A673 (cell line): ENCODE measurements at regions of chr12 and their contacts with region 1.

Region 1: GRCh38 chr12:94101738-94102660 is 46.4 kb upstream of the PLXNC1 start:
- DNase-seq: peak; percentile 93
- H3K4me3 ChIP-seq: peak overlapping the region; percentile 53
- H3K27ac ChIP-seq: no peak overlapping the region
- H3K4me1 ChIP-seq: no peaks in the 10 kb centered on the region
- H3K27me3 ChIP-seq: no peaks in the 10 kb centered on the region
- CTCF ChIP-seq: peak; percentile 91

Region 2: GRCh38 chr12:92784795-92785562 is 1317.0 kb before region 1 on chr12:
- CTCF ChIA-PET with region 1: interaction called, 3 read pairs
- POLR2A ChIA-PET with region 1: no interaction called
- intact Hi-C with region 1: loop called (anchors 5 kb)
- DNase-seq: peak; percentile 88
- H3K4me3 ChIP-seq: no peak overlapping the region
- H3K27ac ChIP-seq: no peak overlapping the region
- H3K4me1 ChIP-seq: no peaks in the 10 kb centered on the region
- H3K27me3 ChIP-seq: no peaks in the 10 kb centered on the region
- CTCF ChIP-seq: peak; percentile 67

Region 3: DNA sequence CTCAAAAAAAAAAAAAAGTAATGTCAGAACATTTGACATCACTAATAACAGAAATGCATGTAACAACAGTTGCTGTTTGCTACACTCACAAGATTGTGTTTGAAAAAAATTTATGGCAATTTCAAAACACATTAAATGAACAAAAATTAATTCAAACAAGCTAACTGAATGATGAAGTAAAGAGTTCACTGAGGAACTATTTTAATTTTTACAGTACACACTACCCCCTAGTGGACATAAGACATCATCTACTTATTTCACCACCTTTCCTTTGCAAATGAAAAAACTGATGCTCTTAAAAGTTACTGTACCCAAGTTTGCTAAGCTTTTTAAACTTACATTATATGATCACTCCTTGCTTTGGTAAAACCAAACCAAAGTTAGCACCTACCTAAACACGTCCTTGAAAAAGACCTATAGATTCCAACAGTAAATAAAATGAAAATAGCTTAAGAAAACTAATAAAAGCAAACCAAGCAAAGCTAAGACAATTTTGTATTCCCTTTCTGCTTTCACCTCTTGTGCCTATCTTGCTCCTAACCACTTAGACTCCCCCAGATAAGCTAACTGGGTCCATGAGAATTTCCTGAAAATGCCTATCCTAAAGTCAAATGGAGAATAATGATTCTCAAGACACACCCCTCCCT is 682.5 kb before region 1 on chr12:
- CTCF ChIA-PET with region 1: interaction called, 4 read pairs
- POLR2A ChIA-PET with region 1: no interaction called
- intact Hi-C with region 1: loop called (anchors 10 kb)
- DNase-seq: peak; percentile 78
- H3K4me3 ChIP-seq: no peak overlapping the region
- H3K27ac ChIP-seq: no peak overlapping the region
- H3K4me1 ChIP-seq: peaks cover 73% of the 10 kb centered on the region
- H3K27me3 ChIP-seq: no peaks in the 10 kb centered on the region
- CTCF ChIP-seq: peak; percentile 66

Region 4: DNA sequence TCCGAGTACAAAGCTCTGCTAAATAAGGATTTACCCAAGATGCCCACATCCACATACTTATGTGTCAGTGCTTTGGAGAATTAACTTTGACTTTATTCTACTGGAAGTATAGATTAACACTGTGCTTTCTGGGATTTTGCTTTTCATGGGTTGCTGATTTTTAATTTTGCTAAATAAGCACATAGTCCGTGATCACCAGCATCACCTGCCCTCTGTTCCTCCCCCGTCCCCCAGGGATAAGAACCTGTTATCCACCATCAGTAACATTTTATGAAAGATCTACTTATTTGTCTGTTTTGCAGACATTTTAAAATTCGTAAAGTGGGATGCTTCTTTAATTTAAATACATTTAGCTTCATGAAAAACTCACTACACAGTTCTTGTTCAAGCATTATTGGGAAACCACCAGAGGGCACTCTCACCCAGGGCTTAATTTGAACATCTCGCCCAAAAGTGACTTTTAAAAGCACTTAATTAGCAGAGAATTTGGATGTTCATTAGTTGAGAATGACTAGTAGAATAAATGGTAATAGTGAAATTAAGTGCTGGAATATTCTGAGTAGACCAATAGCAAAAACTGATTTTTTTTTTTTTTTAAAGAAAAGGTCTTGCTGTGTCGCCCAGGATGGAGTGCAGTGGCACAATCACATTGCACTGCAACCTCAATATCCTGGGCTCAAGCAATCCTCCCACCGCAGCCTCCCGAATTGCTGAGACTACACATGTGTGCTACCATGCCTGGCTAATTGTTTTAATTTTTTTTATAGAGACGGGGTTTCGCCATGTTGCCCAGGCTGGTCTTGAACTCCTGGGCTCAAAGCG is 599.0 kb before region 1 on chr12:
- CTCF ChIA-PET with region 1: interaction called, 52 read pairs
- POLR2A ChIA-PET with region 1: no interaction called
- intact Hi-C with region 1: loop called (anchors 2 kb)
- DNase-seq: peak; percentile 61
- H3K4me3 ChIP-seq: no peak overlapping the region
- H3K27ac ChIP-seq: no peak overlapping the region
- H3K4me1 ChIP-seq: no peaks in the 10 kb centered on the region
- H3K27me3 ChIP-seq: no peaks in the 10 kb centered on the region
- CTCF ChIP-seq: peak; percentile 87

Region 5: DNA sequence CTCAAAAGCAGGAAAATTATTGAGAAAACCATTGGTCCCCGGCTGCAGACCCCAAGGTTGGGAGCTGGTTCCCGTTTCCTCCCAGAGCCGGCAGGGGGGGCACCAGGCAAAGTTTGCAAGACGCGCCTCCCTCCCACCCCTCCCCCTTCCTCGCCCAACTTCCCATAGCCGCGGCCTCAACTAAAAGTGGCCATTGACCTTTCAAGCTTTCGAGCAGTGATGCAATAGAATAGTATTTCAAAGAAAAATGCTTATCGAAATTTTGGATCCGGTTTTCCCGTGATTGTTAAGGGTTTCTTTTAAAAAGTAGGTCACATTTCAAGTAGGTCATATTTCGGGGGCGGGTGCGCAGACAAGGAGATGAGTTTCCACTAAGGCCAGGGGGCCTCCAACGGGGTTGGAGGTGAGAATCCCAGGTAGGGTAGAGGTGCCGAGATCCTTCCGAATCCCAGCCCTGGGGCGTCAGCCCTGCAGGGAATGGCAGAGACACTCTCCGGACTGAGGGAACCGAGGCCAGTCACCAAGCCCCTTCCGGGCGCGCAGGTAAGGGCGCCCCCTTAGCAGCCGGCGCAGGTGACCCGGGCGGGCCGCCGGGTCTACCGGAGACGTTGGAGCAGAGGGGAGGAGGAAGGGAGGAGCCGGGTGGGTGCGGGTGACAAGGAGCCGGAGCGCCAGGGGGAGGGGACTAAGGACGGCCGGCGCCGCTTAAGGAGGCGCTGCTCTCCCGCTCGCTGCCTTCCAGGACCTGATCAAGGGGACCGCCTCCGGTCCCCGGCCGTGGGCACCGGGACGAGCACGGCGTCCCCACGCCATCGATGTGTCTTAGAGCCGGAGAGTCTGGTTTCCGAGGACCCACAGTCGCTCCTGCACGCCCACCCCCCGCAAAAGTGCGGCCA is 532.1 kb before region 1 on chr12:
- CTCF ChIA-PET with region 1: interaction called, 22 read pairs
- POLR2A ChIA-PET with region 1: no interaction called
- intact Hi-C with region 1: loop called (anchors 1 kb)
- DNase-seq: peak; percentile 89
- H3K4me3 ChIP-seq: peak overlapping the region; percentile 75
- H3K27ac ChIP-seq: peak overlapping the region; percentile 39
- H3K4me1 ChIP-seq: peaks cover 3% of the 10 kb centered on the region
- H3K27me3 ChIP-seq: peaks cover 34% of the 10 kb centered on the region
- CTCF ChIP-seq: peak; percentile 80

Region 6: DNA sequence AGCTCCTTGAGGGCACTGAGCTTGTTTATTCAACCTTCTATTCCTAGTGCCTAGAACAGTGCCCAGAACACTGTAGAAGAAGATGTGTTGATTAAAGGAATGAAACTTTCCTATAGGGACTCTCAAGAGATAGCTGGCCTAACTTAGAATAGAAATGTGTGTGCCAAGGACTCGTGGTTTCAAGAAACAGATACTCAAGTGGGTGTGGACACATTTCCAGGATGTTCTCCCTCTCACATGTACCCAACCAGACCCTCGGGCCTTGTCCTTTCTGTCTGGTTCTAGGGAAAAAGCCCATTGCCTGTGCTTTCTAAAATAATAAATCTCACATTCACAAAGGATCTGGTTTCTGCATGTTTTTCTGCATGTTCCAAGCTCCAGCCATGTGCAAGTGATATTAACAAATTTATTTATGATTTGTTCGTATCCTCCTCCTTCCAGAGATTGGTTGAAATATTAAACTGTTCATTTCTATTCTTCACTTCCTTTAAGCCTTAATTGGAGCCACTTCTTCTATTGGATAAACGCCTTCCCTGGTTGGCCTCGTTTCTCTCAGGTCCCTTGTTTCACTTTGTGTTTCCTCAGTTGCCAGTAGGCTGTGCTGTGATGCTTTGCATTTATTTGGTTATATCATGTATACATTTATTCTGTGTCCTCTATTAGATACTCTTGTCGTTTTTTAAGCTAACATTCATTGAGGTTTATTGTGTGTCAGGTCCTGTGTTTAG is 335.0 kb before region 1 on chr12:
- CTCF ChIA-PET with region 1: interaction called, 52 read pairs
- POLR2A ChIA-PET with region 1: no interaction called
- intact Hi-C with region 1: loop called (anchors 1 kb)
- DNase-seq: peak; percentile 74
- H3K4me3 ChIP-seq: no peak overlapping the region
- H3K27ac ChIP-seq: no peak overlapping the region
- H3K4me1 ChIP-seq: peaks cover 16% of the 10 kb centered on the region
- H3K27me3 ChIP-seq: no peaks in the 10 kb centered on the region
- CTCF ChIP-seq: peak; percentile 77